CD4-positive, alpha-beta T cell (primary cell): ENCODE measurements at regions of chr1 and their contacts with region 1.

Region 1: DNA sequence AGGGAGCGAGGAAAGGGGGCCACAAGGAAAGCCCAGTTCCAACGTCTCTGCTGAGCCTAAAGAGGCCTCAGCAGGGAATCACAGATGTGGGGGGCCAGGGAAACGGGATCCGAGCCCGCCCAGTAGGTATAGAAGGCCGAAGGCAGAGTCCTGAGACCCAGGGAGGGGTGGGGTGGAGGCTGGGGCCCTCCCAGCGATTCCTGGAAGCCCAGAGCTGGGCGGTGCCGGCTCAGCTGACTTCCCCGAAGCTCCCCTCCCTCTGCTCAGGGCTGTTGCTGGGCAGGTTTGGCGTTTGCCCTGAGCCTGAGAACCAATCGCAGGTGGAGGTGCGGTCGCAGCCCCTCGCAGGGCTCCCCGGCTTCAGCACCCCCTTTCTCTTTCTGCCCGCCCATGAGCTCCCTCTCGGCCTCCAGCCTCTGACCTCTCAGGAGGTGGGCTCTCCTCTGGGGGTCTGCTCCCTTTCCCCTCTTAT is 12.8 kb downstream of the ADAMTSL4 start:
- DNase-seq: peak; percentile 69 to 93 (median 84)
- ATAC-seq: peak; percentile 47
- H3K4me3 ChIP-seq: peak overlapping the region; percentile 90
- H3K4me3 Mint-ChIP-seq: peak overlapping the region; percentile 96
- H3K27ac ChIP-seq: peak overlapping the region; percentile 92 to 97
- H3K27ac Mint-ChIP-seq: peak overlapping the region; percentile 98
- H3K4me1 ChIP-seq: peaks cover 89% of the 10 kb centered on the region
- H3K4me1 Mint-ChIP-seq: peaks cover 63% of the 10 kb centered on the region
- H3K27me3 ChIP-seq: no peaks in the 10 kb centered on the region
- H3K27me3 Mint-ChIP-seq: no peaks in the 10 kb centered on the region
- CTCF ChIP-seq: no peak

Region 2: DNA sequence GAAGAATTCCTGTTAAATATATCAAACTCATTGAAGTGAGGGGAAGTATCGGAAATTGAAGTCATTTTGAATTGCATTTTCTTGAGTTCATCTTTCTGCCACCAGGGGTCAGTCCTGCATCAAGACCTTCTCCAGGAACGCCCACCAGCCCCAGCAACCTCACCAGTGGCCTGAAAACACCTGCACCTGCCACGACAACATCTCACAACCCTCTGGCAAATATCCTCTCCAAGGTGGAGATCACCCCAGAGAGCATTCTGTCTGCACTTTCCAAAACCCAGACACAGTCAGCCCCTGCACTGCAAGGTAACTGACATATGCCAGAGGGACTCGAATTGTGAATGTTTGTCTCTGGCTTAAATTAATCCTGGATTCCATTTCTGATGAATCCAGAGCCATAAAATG is 97.6 kb before region 1 on chr1:
- CTCF ChIA-PET with region 1: interaction called, 3 read pairs
- POLR2A ChIA-PET with region 1: no interaction called
- intact Hi-C with region 1: loop called in 1 of 2 experiments (anchors 1 kb)
- DNase-seq: peak; percentile 45 to 85 (median 63)
- ATAC-seq: peak; percentile 94
- H3K4me3 ChIP-seq: no peak overlapping the region
- H3K4me3 Mint-ChIP-seq: no peak overlapping the region
- H3K27ac ChIP-seq: no peak overlapping the region
- H3K27ac Mint-ChIP-seq: peak overlapping the region; percentile 7
- H3K4me1 ChIP-seq: no peaks in the 10 kb centered on the region
- H3K4me1 Mint-ChIP-seq: peaks cover 5% of the 10 kb centered on the region
- H3K27me3 ChIP-seq: no peaks in the 10 kb centered on the region
- H3K27me3 Mint-ChIP-seq: no peaks in the 10 kb centered on the region
- CTCF ChIP-seq: peak; percentile 79

Region 3: DNA sequence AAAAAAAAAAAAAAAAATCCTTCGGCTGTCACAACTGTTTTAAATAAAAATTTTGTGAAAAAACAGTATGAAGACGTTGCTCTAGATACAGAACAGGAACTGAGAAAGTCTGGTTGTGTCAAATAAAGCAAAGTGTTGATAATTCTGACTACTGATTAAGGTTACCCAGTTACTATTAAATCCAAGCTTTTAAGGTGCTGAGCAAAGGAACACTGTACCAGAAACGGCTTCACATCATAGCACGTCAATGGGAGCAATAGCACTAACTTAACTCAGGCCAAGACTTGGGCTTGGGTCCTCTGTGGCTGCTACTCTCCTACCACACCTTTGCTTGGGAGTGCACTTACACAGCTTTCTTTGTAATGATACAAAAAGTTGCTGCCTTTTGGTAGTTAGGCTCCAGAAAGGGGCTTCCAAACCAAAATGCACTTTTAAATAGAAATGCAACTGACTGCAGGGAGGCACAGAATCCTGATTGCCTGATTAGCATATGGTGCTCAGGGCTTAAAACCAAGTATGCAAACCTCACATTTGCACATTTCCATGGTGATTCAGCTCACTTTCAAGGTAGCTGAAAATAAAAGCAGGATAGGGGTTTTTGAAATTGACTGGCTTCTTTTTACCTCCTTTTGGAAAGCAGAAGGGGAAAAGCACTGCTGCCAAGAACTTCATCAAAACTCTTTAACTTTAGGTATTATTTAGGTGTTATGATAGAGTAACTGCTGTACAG is 11.1 kb after region 1 on chr1:
- CTCF ChIA-PET with region 1: interaction called, 183 read pairs
- POLR2A ChIA-PET with region 1: interaction called, 1,538 read pairs
- intact Hi-C with region 1: loop called in 1 of 2 experiments (anchors 1 kb)
- DNase-seq: peak in 2 of 14 experiments; percentile 33 to 41
- ATAC-seq: no peak
- H3K4me3 ChIP-seq: peak overlapping the region; percentile 84
- H3K4me3 Mint-ChIP-seq: peak overlapping the region; percentile 86
- H3K27ac ChIP-seq: peak overlapping the region; percentile 46 to 97
- H3K27ac Mint-ChIP-seq: peak overlapping the region; percentile 98
- H3K4me1 ChIP-seq: peaks cover 70% of the 10 kb centered on the region
- H3K4me1 Mint-ChIP-seq: peaks cover 84% of the 10 kb centered on the region
- H3K27me3 ChIP-seq: no peaks in the 10 kb centered on the region
- H3K27me3 Mint-ChIP-seq: no peaks in the 10 kb centered on the region
- CTCF ChIP-seq: no peak

Region 4: GRCh38 chr1:150613061-150613920 is 51.3 kb after region 1 on chr1:
- CTCF ChIA-PET with region 1: interaction called, 131 read pairs
- POLR2A ChIA-PET with region 1: interaction called, 501 read pairs
- intact Hi-C with region 1: loop called in 1 of 2 experiments (anchors 2 kb)
- DNase-seq: peak in 10 of 14 experiments; percentile 16 to 84 (median 35)
- ATAC-seq: peak; percentile 26
- H3K4me3 ChIP-seq: no peak overlapping the region
- H3K4me3 Mint-ChIP-seq: peak overlapping the region; percentile 30
- H3K27ac ChIP-seq: peak overlapping the region; percentile 75 to 76
- H3K27ac Mint-ChIP-seq: peak overlapping the region; percentile 80
- H3K4me1 ChIP-seq: peaks cover 60% of the 10 kb centered on the region
- H3K4me1 Mint-ChIP-seq: peaks cover 55% of the 10 kb centered on the region
- H3K27me3 ChIP-seq: no peaks in the 10 kb centered on the region
- H3K27me3 Mint-ChIP-seq: no peaks in the 10 kb centered on the region
- CTCF ChIP-seq: no peak

Region 5: DNA sequence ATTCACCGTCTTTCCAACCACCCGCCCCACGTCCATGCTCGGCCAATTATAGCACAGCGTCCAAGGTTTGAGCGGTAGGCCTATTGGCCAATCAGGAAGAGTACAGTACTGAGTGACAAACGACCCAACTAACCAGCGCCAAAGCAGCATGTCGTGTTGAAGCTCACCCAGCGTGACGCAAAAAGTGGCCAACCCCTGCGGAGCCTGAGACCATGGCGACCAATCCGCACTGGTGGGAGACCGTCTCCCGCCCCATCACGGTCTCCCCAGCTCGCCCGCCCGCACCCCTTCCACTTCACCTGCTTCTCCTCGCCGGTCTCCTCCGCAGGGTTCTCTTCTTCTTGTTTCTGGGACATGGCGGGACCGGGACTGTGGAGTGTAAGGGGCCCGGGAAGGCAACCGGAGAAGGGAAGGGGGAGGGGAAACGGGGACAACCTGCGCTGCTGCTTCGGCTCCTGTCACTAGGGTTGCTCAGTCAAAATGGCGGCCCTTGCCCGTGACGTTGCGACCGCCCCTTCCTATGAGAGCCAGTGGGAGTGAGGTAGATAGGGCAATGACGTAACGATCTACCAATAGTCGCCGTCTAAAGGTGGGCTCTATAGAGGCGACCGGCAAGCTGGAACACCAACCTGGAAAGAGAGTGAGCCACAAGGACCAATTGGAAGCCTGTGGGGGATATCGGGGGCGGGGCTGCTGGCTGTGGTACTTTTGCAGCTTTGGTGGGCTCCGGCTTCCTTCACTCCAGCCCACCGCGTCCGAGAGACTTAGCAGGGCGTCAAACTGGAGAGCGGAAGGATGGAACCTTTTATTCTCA is 67.3 kb after region 1 on chr1 and contains the start of gene ENSA:
- CTCF ChIA-PET with region 1: interaction called, 24 read pairs
- POLR2A ChIA-PET with region 1: interaction called, 501 read pairs
- intact Hi-C with region 1: loop called in 1 of 2 experiments (anchors 2 kb)
- DNase-seq: peak; percentile 89 to 99 (median 92)
- ATAC-seq: peak; percentile 85
- H3K4me3 ChIP-seq: peak within 1 kb of the TSS; percentile 77
- H3K4me3 Mint-ChIP-seq: no peak within 1 kb of the TSS
- H3K27ac ChIP-seq: peak within 1 kb of the TSS; percentile 96 to 97
- H3K27ac Mint-ChIP-seq: no peak within 1 kb of the TSS
- H3K4me1 ChIP-seq: peaks cover 24% of the 10 kb centered on the region
- H3K4me1 Mint-ChIP-seq: peaks cover 21% of the 10 kb centered on the region
- H3K27me3 ChIP-seq: no peaks in the 10 kb centered on the region
- H3K27me3 Mint-ChIP-seq: no peaks in the 10 kb centered on the region
- CTCF ChIP-seq: no peak
- total RNA-seq, gene ENSA: 132 to 137 TPM

Region 6: DNA sequence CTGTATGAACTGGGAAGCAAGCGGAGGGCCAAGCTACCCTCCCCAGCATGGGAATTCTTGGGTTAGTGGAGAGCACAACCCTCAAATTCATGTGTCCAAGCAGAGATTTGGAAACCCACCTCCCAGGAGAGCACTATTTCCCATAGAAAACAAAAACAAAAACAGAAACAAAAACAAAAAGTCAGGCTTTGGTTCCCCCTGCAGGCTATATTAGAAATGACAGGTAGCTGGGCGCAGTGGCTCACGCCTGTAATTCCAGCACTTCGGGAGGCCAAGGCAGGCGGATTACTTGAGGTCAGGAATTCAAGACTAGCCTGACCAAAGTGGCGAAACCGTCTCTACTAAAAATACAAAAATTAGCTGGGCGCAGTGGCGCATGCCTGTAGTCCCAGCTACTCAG is 433.9 kb after region 1 on chr1:
- CTCF ChIA-PET with region 1: no interaction called
- POLR2A ChIA-PET with region 1: interaction called, 3 read pairs
- intact Hi-C with region 1: loop called in 1 of 2 experiments (anchors 5 kb)
- DNase-seq: peak in 6 of 14 experiments; percentile 15 to 65 (median 42)
- ATAC-seq: peak; percentile 60
- H3K4me3 ChIP-seq: no peak overlapping the region
- H3K4me3 Mint-ChIP-seq: no peak overlapping the region
- H3K27ac ChIP-seq: peak overlapping the region in 1 of 2 donors; percentile 26
- H3K27ac Mint-ChIP-seq: peak overlapping the region; percentile 65
- H3K4me1 ChIP-seq: peaks cover 27% of the 10 kb centered on the region
- H3K4me1 Mint-ChIP-seq: peaks cover 16% of the 10 kb centered on the region
- H3K27me3 ChIP-seq: no peaks in the 10 kb centered on the region
- H3K27me3 Mint-ChIP-seq: no peaks in the 10 kb centered on the region
- CTCF ChIP-seq: peak; percentile 96